ENCODE measurements at regions of chr17 and their contacts with region 1.

Region 1: GRCh38 chr17:77140166-77140878 is 447 bp upstream of the SEC14L1 start:
- DNase-seq: peak; percentile 100
- ATAC-seq: peak; percentile 88
- H3K4me3 Mint-ChIP-seq: peak overlapping the region; percentile 75
- H3K27ac Mint-ChIP-seq: peak overlapping the region; percentile 94
- H3K4me1 Mint-ChIP-seq: peaks cover 55% of the 10 kb centered on the region
- H3K27me3 Mint-ChIP-seq: no peaks in the 10 kb centered on the region
- CTCF ChIP-seq: no peak

Region 2: DNA sequence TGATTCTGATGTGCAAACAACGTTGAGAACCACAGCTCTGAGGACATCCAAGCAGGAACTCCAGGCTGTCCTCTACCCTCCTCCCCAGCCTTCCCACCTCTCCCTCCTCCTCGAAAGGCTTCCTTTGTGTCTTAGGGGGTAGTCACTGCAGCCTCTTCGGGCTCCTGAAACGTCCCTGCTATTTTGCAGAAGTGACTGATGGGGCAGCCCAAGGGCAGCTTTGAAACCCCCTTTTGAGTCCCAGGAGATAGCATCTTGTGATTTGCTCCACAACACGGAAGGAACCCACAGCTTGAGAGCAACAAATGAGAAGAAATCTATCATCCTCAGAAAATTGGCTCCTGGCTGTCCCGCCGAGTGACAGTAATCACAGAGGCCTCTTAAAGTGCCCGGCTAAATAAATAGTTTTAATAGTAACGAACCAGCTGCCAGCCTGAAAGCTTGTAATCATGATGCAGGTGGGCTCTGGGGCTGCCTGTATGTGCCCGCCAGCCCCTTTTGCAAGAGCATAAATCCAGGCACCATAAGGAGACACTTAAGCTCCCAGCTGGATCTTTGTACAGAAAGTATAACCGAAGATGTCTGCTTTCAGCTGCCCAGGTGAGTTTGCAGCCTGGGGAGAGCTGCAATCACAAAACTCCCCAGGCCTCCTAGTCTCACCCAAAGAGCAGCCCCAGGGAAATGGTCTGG is 61.2 kb before region 1 on chr17:
- CTCF ChIA-PET with region 1: no interaction called
- POLR2A ChIA-PET with region 1: interaction called, 12 read pairs
- intact Hi-C with region 1: no loop called
- DNase-seq: peak; percentile 25
- ATAC-seq: peak; percentile 97
- H3K4me3 Mint-ChIP-seq: peak overlapping the region; percentile 51
- H3K27ac Mint-ChIP-seq: peak overlapping the region; percentile 76
- H3K4me1 Mint-ChIP-seq: peaks cover 13% of the 10 kb centered on the region
- H3K27me3 Mint-ChIP-seq: peaks cover 11% of the 10 kb centered on the region
- CTCF ChIP-seq: no peak

Region 3: GRCh38 chr17:77109764-77110359 is 30.5 kb before region 1 on chr17:
- CTCF ChIA-PET with region 1: interaction called, 3 read pairs
- POLR2A ChIA-PET with region 1: interaction called, 22 read pairs
- intact Hi-C with region 1: loop called (anchors 1 kb)
- DNase-seq: no peak
- ATAC-seq: peak; percentile 23
- H3K4me3 Mint-ChIP-seq: peak overlapping the region; percentile 53
- H3K27ac Mint-ChIP-seq: peak overlapping the region; percentile 38
- H3K4me1 Mint-ChIP-seq: peaks cover 56% of the 10 kb centered on the region
- H3K27me3 Mint-ChIP-seq: no peaks in the 10 kb centered on the region
- CTCF ChIP-seq: no peak

Region 4: GRCh38 chr17:77189148-77189547 is 48.8 kb after region 1 on chr17:
- CTCF ChIA-PET with region 1: interaction called, 3 read pairs
- POLR2A ChIA-PET with region 1: interaction called, 29 read pairs
- intact Hi-C with region 1: loop called (anchors 2 kb)
- DNase-seq: no peak
- ATAC-seq: peak; percentile 81
- H3K4me3 Mint-ChIP-seq: peak overlapping the region; percentile 66
- H3K27ac Mint-ChIP-seq: peak overlapping the region; percentile 79
- H3K4me1 Mint-ChIP-seq: peaks cover 33% of the 10 kb centered on the region
- H3K27me3 Mint-ChIP-seq: no peaks in the 10 kb centered on the region
- CTCF ChIP-seq: no peak

Region 5: DNA sequence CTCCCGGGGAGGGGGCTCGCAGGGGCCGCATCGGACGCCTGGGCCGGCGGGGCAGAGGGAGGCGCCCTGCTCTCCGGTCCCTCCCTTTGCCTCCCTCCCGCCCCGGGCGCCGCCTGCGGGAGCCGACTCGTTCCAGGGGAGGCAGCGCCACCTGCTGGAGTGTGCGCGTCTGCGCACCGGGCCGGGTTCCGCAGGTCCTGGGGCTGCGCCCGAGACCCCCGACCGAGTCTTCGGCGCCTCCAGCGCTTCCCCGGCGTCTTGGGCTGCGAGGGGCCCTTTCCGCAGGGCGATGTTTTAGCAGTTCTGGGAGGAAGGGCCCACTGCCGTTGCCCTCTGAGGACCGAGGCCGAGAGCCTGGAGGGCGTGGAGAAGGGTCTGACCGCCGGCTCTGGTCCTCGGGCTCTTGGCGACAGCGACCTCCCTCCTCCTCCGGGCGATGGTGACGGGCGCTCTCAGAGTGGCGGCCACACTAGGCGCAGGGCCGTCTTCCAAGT is 106.8 kb after region 1 on chr17:
- CTCF ChIA-PET with region 1: no interaction called
- POLR2A ChIA-PET with region 1: interaction called, 3 read pairs
- intact Hi-C with region 1: loop called (anchors 2 kb)
- DNase-seq: peak; percentile 89
- ATAC-seq: peak; percentile 99
- H3K4me3 Mint-ChIP-seq: peak overlapping the region; percentile 55
- H3K27ac Mint-ChIP-seq: no peak overlapping the region
- H3K4me1 Mint-ChIP-seq: peaks cover 14% of the 10 kb centered on the region
- H3K27me3 Mint-ChIP-seq: peaks cover 28% of the 10 kb centered on the region
- CTCF ChIP-seq: peak; percentile 68

Region 6: DNA sequence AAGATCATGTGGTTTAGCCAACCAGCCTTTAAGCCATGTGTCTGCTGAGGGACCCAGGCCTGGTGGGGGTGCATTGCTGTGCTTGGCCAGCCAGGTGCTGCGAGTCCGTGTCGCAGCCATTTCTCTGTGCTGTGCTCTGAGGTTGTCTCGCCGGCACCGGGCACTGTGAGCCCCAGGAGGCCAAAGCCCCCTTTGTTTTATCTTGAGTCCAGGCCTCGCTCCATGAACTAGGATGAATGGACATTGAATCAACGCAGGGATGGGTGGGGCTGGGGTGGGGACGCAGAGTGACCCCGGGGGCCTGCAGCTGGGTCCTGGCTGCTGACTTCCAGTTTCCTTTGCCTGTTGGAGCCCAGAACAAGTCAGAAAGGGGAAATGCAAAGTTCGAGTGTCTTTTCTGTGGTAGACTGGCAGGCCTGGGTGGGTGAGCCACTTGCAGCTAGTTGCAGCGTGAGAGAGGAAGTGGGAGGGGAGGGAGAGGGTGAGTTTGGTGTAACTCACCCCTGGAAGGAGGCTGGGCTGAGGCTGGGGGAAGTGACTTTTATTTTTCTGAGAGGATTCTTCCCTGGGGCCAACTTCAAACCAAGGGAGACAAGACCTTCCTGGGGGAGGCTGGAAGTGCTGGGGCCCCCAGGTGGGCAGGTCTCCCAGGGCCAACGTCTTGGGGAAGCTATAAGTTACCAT is 325.2 kb after region 1 on chr17:
- CTCF ChIA-PET with region 1: no interaction called
- POLR2A ChIA-PET with region 1: no interaction called
- intact Hi-C with region 1: loop called (anchors 10 kb)
- DNase-seq: peak; percentile 62
- ATAC-seq: peak; percentile 81
- H3K4me3 Mint-ChIP-seq: peak overlapping the region; percentile 75
- H3K27ac Mint-ChIP-seq: peak overlapping the region; percentile 93
- H3K4me1 Mint-ChIP-seq: peaks cover 94% of the 10 kb centered on the region
- H3K27me3 Mint-ChIP-seq: no peaks in the 10 kb centered on the region
- CTCF ChIP-seq: no peak